Activated CD4-positive, alpha-beta T cell treated with anti-CD3 and anti-CD28 coated beads for 36 hours (primary cell): ENCODE measurements at regions of chr16 and their contacts with region 1.

Region 1: GRCh38 chr16:72664509-72665225 is 383.3 kb downstream of the ZFHX3 start:
- DNase-seq: peak; percentile 97
- ATAC-seq: peak; percentile 100
- H3K4me3 Mint-ChIP-seq: peak overlapping the region; percentile 99
- H3K27ac Mint-ChIP-seq: peak overlapping the region; percentile 96
- H3K4me1 Mint-ChIP-seq: peaks cover 13% of the 10 kb centered on the region
- H3K27me3 Mint-ChIP-seq: peaks cover 4% of the 10 kb centered on the region

Region 2: GRCh38 chr16:71723537-71724319 is 940.9 kb before region 1 on chr16:
- CTCF ChIA-PET with region 1: no interaction called
- POLR2A ChIA-PET with region 1: no interaction called
- intact Hi-C with region 1: loop called in 1 of 2 experiments (anchors 10 kb)
- DNase-seq: peak; percentile 87
- ATAC-seq: peak; percentile 87
- H3K4me3 Mint-ChIP-seq: peak overlapping the region; percentile 95
- H3K27ac Mint-ChIP-seq: peak overlapping the region; percentile 68
- H3K4me1 Mint-ChIP-seq: peaks cover 16% of the 10 kb centered on the region
- H3K27me3 Mint-ChIP-seq: no peaks in the 10 kb centered on the region

Region 3: GRCh38 chr16:72480901-72481300 is 183.8 kb before region 1 on chr16:
- CTCF ChIA-PET with region 1: no interaction called
- POLR2A ChIA-PET with region 1: no interaction called
- intact Hi-C with region 1: loop called in 1 of 2 experiments (anchors 5 kb)
- DNase-seq: no peak
- ATAC-seq: no peak
- H3K4me3 Mint-ChIP-seq: no peak overlapping the region
- H3K27ac Mint-ChIP-seq: no peak overlapping the region
- H3K4me1 Mint-ChIP-seq: peaks cover 30% of the 10 kb centered on the region
- H3K27me3 Mint-ChIP-seq: no peaks in the 10 kb centered on the region

Region 4: DNA sequence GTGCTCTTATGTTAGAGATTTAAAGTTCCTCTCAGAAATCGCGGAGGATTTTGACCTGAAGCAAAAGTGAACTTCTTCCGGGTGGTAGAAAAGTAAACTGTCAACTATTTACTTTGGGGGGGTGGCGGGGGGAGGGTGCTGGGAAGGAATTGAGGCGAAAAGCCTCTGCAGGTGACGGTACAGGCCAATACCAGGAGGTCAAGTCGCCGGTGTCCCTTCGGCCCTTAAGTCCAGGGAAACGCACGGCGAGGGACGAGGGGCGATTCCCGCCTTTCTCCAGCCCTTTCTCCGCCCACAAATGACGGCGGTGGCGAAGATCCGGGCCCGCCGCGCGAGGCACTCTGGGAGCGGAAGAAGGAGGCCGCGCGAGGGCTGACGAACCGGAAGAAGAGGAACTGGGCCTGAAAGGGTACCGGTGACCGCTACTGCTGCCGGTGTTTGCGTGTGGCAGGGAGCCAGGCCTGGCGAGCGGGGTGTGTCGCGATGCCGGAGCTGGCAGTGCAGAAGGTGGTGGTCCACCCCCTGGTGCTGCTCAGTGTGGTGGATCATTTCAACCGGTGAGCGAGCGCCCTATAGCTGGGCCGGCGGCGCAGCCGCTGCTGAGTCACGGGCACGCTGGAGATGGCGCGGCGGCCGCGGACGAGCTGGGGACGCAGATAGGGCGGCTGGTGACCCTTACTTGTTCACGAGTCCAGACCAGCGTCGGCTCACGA is 1631.9 kb after region 1 on chr16 and contains the start of gene PSMD7:
- CTCF ChIA-PET with region 1: no interaction called
- POLR2A ChIA-PET with region 1: no interaction called
- intact Hi-C with region 1: loop called in 1 of 2 experiments (anchors 2 kb)
- DNase-seq: peak; percentile 95
- ATAC-seq: peak; percentile 91
- H3K4me3 Mint-ChIP-seq: peak within 1 kb of the TSS; percentile 98
- H3K27ac Mint-ChIP-seq: peak within 1 kb of the TSS; percentile 99
- H3K4me1 Mint-ChIP-seq: peaks cover 34% of the 10 kb centered on the region
- H3K27me3 Mint-ChIP-seq: no peaks in the 10 kb centered on the region
- total RNA-seq, gene PSMD7: 122 to 134 TPM